ENCODE measurements at regions of chr7 and their contacts with region 1.

Region 1: GRCh38 chr7:12490117-12490688 is 80.3 kb upstream of the SCIN start:
- DNase-seq: no peak
- ATAC-seq: no peak

Region 2: GRCh38 chr7:11427686-11428273 is 1062.4 kb before region 1 on chr7:
- intact Hi-C with region 1: loop called (anchors 10 kb)
- DNase-seq: no peak
- ATAC-seq: no peak

Region 3: DNA sequence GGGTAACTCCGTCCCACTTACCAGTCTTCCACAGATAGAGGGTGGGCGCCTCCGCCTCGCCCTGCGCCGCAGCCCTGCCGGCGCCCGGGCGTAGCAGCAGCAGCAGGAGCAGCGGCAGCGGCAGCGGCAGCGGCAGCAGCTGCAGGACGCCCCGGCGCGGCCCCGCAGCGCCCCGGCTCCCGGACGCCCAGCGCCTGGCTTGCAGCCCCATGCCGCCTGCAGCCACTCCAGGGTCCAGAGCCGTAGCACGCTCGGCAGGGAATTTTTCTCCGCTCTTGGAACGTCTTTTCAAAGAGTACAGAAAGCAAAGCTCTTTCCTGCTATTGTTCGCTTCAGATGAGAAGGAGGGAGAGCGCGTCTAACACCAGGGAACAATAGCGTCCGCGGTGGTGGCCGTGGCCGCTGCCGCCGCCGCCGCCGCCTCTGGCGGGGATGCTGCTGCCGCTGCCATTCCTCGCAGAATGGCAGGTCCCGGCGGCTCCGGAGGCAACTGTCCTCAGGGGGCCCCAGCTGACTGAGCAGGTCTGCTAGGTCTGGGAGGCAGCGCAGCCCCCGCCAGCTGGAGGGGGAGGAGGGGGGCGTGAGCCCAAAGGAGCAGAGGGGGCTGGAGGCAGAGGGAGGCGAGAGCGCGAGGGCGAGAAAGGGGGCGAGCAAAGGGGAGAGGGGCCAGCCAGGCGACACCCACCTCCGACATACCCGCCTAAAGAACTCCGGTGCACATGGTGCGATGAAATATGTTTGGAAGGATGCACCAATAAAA is 658.3 kb before region 1 on chr7 and contains the start of gene THSD7A:
- intact Hi-C with region 1: loop called (anchors 5 kb)
- DNase-seq: peak; percentile 63
- ATAC-seq: peak; percentile 96
- total RNA-seq, gene THSD7A: 0.70 TPM

Region 4: GRCh38 chr7:12929476-12930140 is 439.4 kb after region 1 on chr7:
- intact Hi-C with region 1: no loop called
- DNase-seq: no peak
- ATAC-seq: no peak

Measured in Right ventricle myocardium superior (tissue), 1 donor.